ENCODE measurements at regions of chr7 and their contacts with region 1.

Region 1: GRCh38 chr7:97027427-97028234 is 3.0 kb upstream of the DLX5 start:
- DNase-seq: peak; percentile 46 to 49
- ATAC-seq: peak; percentile 76 to 95
- H3K4me3 ChIP-seq: peak overlapping the region; percentile 24 to 56 (median 46)
- H3K27ac ChIP-seq: no peak overlapping the region
- H3K4me1 ChIP-seq: peaks cover 16 to 23% of the 10 kb centered on the region in 2 donors
- H3K27me3 ChIP-seq: peaks cover 47 to 59% (median 48%) of the 10 kb centered on the region in 3 donors
- CTCF ChIP-seq: peak; percentile 47 to 79 (median 73)
- POLR2A ChIP-seq: no peak

Region 2: GRCh38 chr7:95772298-95772770 is 1255.3 kb before region 1 on chr7 and contains the start of gene DYNC1I1:
- in situ Hi-C with region 1: loop called in 1 of 4 experiments (anchors 25 kb)
- intact Hi-C with region 1: no loop called
- DNase-seq: peak; percentile 12 to 33
- ATAC-seq: peak; percentile 59 to 70
- H3K4me3 ChIP-seq: peak within 1 kb of the TSS; percentile 65 to 79 (median 74)
- H3K27ac ChIP-seq: peak within 1 kb of the TSS; percentile 53 to 75 (median 65)
- H3K4me1 ChIP-seq: peaks cover 0 to 4% of the 10 kb centered on the region in 2 donors
- H3K27me3 ChIP-seq: no peaks in the 10 kb centered on the region
- CTCF ChIP-seq: no peak
- POLR2A ChIP-seq: peak; percentile 52 to 54
- total RNA-seq, gene DYNC1I1: 7.8 to 21.3 (median 11.6) TPM

Region 3: DNA sequence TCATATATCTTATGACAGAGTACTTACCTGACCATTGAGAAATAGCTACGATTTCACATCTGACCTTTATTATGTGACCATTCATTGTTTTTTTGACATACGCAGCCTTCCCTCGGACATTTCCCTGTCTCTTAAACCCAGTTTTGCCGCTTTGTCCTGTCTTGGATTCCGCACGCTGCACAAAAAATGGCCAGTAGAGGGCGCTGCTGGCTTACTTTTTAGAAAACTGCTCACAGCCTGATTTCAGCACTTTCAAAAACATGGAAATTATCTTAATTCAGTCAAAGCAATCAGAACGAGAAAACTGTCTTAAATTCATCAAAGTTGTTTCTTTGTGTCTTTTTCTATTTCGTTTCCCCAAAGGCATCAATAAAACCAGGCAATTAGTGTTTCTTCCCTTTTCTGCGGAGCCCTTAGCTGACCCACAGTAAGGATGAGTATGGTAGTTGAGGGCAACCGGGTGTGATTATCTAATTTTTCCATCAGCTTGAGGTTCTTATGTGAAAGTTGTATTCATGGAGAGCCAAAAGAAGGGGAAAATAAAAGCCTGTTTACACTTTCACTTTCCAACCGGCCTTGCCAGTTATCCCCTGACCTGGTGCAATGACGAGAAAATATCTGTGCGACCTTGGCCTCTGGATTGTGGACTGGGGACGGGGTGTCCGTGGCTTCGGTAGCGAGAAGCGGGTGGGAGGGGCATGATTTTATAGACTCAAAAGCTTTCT is 1110.9 kb before region 1 on chr7:
- in situ Hi-C with region 1: loop called in 2 of 4 experiments (anchors 10 to 25 kb)
- intact Hi-C with region 1: loop called (anchors 1 kb)
- DNase-seq: peak; percentile 47 to 50
- ATAC-seq: peak; percentile 52 to 72
- H3K4me3 ChIP-seq: no peak overlapping the region
- H3K27ac ChIP-seq: no peak overlapping the region
- H3K4me1 ChIP-seq: no peaks in the 10 kb centered on the region
- H3K27me3 ChIP-seq: no peaks in the 10 kb centered on the region
- CTCF ChIP-seq: peak; percentile 72 to 91 (median 84)
- POLR2A ChIP-seq: no peak

Region 4: DNA sequence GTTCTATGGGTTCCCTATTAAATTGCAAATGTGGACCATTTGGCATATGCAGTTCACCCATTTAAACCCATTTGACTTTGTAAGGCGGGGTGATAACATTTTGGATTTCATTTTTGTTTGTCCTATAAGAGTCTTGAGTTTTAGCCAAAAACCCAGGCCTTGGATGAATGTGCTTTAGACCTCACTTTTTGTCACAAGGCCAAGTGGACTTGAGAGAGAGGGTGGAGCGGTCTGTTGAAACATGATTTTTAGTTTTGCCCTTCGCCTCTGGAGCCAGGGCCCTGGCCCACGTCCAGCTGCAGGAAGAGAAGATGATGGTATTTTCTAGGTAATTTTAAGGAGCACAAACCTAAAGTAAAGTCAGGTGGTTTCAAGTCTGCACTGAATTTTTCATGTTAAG is 965.8 kb before region 1 on chr7:
- in situ Hi-C with region 1: loop called in 1 of 4 experiments (anchors 25 kb)
- intact Hi-C with region 1: no loop called
- DNase-seq: no peak
- ATAC-seq: no peak
- H3K4me3 ChIP-seq: no peak overlapping the region
- H3K27ac ChIP-seq: no peak overlapping the region
- H3K4me1 ChIP-seq: no peaks in the 10 kb centered on the region
- H3K27me3 ChIP-seq: no peaks in the 10 kb centered on the region
- CTCF ChIP-seq: no peak
- POLR2A ChIP-seq: no peak

Region 5: GRCh38 chr7:96075510-96076349 is 951.9 kb before region 1 on chr7:
- in situ Hi-C with region 1: loop called in 3 of 4 experiments (anchors 5 to 25 kb)
- intact Hi-C with region 1: loop called (anchors 2 kb)
- DNase-seq: peak; percentile 7 to 18
- ATAC-seq: peak; percentile 69 to 77
- H3K4me3 ChIP-seq: peak overlapping the region; percentile 51 to 66 (median 53)
- H3K27ac ChIP-seq: no peak overlapping the region
- H3K4me1 ChIP-seq: no peaks in the 10 kb centered on the region
- H3K27me3 ChIP-seq: peaks cover 0 to 10% (median 7%) of the 10 kb centered on the region in 3 donors
- CTCF ChIP-seq: peak; percentile 48 to 82 (median 64)
- POLR2A ChIP-seq: no peak

Measured in gastrocnemius medialis (tissue), 4 donors.